Endothelial cell of umbilical vein (primary cell): ENCODE measurements at regions of chr6 and their contacts with region 1.

Region 1: GRCh38 chr6:113994918-113995342 is 24.0 kb upstream of the HDAC2 start:
- DNase-seq: peak; percentile 91
- H3K4me3 ChIP-seq: no peak overlapping the region
- H3K27ac ChIP-seq: peak overlapping the region; percentile 84
- H3K4me1 ChIP-seq: peaks cover 22% of the 10 kb centered on the region
- H3K27me3 ChIP-seq: peaks cover 0 to 2% of the 10 kb centered on the region in 2 experiments
- CTCF ChIP-seq: peak; percentile 72 to 95
- POLR2A ChIP-seq: no peak

Region 2: GRCh38 chr6:113970805-113971676 is 23.9 kb before region 1 on chr6 and contains the start of gene HDAC2:
- CTCF ChIA-PET with region 1: interaction called, 10 read pairs
- POLR2A ChIA-PET with region 1: interaction called, 5 read pairs
- dilution Hi-C with region 1: no loop called
- intact Hi-C with region 1: loop called (anchors 1 kb)
- DNase-seq: peak; percentile 84
- H3K4me3 ChIP-seq: peak within 1 kb of the TSS; percentile 73 to 99 (median 93)
- H3K27ac ChIP-seq: peak within 1 kb of the TSS; percentile 93
- H3K4me1 ChIP-seq: peaks cover 24% of the 10 kb centered on the region
- H3K27me3 ChIP-seq: no peaks in the 10 kb centered on the region
- CTCF ChIP-seq: no peak
- POLR2A ChIP-seq: peak; percentile 75
- total RNA-seq, gene HDAC2: 142 and 148 TPM in 2 replicates

Region 3: DNA sequence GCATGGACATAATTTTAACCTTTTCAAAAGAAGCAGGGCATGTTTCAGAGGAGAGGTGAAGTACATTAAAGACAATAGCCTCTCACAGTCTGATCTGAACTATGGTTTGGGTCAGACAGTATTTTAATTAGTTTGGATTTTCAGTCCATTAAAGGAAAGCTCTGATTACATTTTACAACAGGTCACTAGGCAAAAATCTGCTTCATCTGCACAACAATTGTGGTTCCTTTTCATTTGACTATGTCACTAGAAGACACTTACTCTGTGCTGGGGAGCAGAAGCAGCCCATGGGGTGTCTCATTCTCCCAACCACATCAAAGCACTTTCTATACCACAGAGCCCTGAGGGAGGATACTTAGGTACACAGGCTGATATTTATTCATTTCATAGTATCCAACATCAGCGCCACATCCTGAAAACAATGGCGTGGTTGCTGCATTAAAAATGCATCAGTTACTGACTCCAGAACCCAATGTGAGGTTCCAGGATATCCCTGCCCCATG is 12.6 kb after region 1 on chr6:
- CTCF ChIA-PET with region 1: interaction called, 20 read pairs
- POLR2A ChIA-PET with region 1: interaction called, 4 read pairs
- dilution Hi-C with region 1: no loop called
- intact Hi-C with region 1: loop called (anchors 1 kb)
- DNase-seq: no peak
- H3K4me3 ChIP-seq: no peak overlapping the region
- H3K27ac ChIP-seq: peak overlapping the region; percentile 45
- H3K4me1 ChIP-seq: peaks cover 19% of the 10 kb centered on the region
- H3K27me3 ChIP-seq: no peaks in the 10 kb centered on the region
- CTCF ChIP-seq: no peak
- POLR2A ChIP-seq: no peak

Region 4: DNA sequence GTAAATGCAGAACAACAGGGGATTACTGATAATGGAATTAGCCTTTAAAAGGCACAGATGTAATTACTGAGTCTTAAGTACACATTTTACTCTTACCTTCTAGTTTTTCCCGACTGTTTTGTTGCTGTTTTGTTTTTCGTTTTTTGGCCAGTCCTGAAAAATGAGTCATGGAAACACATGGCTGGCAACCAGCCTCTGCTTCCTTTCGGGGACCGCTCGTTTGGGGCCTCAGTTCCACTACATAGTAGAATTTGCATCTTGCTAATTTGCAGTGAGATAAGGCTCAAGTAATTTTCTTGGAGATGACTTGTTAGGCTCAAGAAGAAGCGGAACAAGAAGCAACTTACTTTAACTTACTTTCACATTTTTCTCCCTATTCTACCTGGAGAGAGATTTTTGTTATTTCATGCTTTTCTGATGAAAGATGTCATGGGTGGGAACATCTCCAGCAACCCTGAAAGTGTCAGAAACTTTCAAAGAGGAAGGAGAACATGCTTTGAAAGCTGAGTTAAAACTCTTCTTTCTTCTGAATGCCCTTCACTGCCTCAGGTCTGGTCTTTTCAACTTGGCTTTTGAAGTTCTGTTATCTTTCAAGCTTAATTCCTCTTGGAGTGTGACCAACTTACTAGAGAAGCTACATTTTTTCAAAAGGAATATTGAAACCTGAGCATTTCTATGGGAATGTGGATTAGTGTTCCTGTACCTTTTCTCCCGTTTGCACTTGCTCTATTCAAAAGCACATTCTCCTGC is 47.5 kb after region 1 on chr6:
- CTCF ChIA-PET with region 1: interaction called, 10 read pairs
- POLR2A ChIA-PET with region 1: interaction called, 11 read pairs
- dilution Hi-C with region 1: no loop called
- intact Hi-C with region 1: no loop called
- DNase-seq: no peak
- H3K4me3 ChIP-seq: no peak overlapping the region
- H3K27ac ChIP-seq: no peak overlapping the region
- H3K4me1 ChIP-seq: no peaks in the 10 kb centered on the region
- H3K27me3 ChIP-seq: peaks cover 0 to 1% of the 10 kb centered on the region in 2 experiments
- CTCF ChIP-seq: no peak
- POLR2A ChIP-seq: no peak

Region 5: DNA sequence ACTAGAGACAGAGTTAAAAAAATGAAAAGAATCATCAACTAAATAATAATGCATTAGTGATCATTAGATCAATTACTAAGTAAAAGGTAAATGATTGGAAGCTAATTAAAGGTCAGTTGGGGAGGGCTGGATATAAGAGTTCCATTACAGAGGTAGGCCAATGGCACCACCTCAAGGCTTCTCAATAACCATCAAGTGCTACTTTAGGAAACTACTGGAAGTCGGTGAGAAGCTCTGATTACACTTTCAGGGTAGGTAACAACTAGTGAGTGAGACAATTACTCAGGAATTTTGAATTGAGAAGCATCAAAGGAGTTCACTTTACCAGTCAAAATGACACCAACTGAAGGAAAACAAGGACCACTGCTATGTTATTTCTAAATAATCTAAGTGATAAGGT is 66.2 kb after region 1 on chr6:
- CTCF ChIA-PET with region 1: interaction called, 33 read pairs
- POLR2A ChIA-PET with region 1: no interaction called
- dilution Hi-C with region 1: no loop called
- intact Hi-C with region 1: loop called (anchors 2 kb)
- DNase-seq: no peak
- H3K4me3 ChIP-seq: no peak overlapping the region
- H3K27ac ChIP-seq: no peak overlapping the region
- H3K4me1 ChIP-seq: no peaks in the 10 kb centered on the region
- H3K27me3 ChIP-seq: peaks cover 0 to 6% of the 10 kb centered on the region in 2 experiments
- CTCF ChIP-seq: no peak
- POLR2A ChIP-seq: no peak

Region 6: DNA sequence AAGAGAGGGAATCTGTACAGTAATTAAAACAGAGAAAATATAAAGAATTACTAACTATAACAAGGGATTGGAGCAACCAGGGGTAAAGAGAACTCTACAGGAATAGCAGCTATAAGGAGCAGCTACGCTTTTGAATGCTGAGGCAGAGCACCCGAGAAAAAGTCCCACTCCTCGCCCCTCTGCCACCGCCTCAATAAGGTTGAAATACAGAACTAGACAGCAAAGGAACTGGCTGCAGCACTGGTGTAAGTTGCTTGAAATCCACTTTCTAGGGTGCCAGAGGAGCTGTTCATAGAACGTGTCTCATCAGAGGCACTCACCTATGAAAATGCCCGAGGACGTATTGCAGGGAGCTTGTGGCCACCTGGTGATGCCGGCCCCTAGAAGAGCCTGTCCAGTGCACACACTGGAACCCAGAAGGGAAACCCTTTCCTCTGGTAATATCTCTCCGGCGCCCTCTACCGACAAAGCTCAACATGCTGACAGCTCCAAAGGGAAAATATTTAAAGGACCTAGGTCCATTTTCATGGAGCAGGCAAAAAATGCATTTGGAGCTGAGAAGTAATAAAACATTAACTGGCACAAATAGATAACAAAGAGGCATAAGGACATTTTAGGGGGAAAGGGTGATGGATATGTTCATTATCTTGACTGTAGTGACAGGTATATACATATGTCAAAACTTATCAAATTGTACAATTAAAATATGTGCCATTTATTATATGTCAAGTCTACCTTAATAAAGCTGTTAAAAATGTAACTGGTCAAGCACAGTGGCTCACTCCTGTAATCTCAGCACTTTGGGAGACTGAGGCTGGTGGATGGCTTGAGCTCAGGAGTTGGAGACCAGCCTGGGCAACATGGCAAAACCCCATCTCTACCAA is 113.4 kb after region 1 on chr6:
- CTCF ChIA-PET with region 1: interaction called, 352 read pairs
- POLR2A ChIA-PET with region 1: interaction called, 8 read pairs
- dilution Hi-C with region 1: no loop called
- intact Hi-C with region 1: loop called (anchors 1 kb)
- DNase-seq: peak; percentile 71
- H3K4me3 ChIP-seq: no peak overlapping the region
- H3K27ac ChIP-seq: no peak overlapping the region
- H3K4me1 ChIP-seq: no peaks in the 10 kb centered on the region
- H3K27me3 ChIP-seq: peaks cover 8 to 15% of the 10 kb centered on the region in 2 experiments
- CTCF ChIP-seq: peak; percentile 68 to 71
- POLR2A ChIP-seq: no peak

Region 7: DNA sequence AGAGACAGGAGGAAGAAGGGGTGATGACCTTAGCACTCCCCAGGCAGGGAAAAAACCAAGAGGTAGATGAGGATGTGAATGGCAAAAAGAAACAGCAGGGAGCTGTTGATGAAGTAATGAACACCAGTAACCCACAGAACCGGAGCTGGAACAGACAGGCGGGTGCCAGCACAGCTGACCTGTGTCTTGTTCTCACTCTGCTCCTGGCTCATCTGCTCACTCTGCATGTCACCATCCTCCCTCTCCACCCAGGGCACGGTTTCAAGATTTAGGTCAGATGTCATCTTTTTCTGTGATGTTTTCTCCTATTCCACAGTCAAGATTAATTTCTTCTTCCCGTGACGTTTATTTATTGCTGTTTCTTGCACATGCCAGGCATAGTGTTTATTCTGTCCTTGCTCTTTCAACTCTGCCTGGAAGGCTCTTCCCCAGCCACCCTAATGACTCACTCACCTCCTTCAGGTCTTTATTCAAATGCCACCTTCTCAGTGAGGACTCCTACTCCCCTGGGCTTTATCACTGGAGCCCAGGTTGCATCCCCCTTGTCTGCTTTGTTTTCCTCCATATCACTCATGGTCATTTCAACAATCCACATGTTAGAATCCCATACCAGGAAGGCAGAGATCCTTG is 140.5 kb after region 1 on chr6:
- CTCF ChIA-PET with region 1: no interaction called
- POLR2A ChIA-PET with region 1: no interaction called
- dilution Hi-C with region 1: no loop called
- intact Hi-C with region 1: no loop called
- DNase-seq: no peak
- H3K4me3 ChIP-seq: no peak overlapping the region
- H3K27ac ChIP-seq: no peak overlapping the region
- H3K4me1 ChIP-seq: no peaks in the 10 kb centered on the region
- H3K27me3 ChIP-seq: no peaks in the 10 kb centered on the region
- CTCF ChIP-seq: no peak
- POLR2A ChIP-seq: no peak

Region 8: DNA sequence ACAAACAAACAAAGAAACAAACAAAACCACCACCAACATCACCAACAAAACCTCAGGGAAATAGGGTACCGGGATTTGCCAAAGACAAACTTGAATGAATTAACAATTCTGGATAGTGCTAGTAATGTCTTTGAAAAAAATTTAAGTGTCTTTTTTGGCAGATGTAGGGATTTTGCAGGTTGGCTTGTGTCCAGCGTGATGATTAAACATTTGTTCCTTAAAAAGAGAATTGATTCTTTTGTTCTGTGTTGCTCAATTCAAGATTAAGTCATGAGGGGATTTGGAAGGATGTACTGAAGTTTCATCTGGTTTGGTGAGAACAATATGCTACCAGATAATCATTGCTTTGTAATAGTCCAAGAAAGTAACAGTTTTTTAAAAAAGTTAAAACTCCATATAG is 473.0 kb after region 1 on chr6:
- CTCF ChIA-PET with region 1: no interaction called
- POLR2A ChIA-PET with region 1: no interaction called
- dilution Hi-C with region 1: no loop called
- intact Hi-C with region 1: no loop called
- DNase-seq: no peak
- H3K4me3 ChIP-seq: no peak overlapping the region
- H3K27ac ChIP-seq: no peak overlapping the region
- H3K4me1 ChIP-seq: no peaks in the 10 kb centered on the region
- H3K27me3 ChIP-seq: no peaks in the 10 kb centered on the region
- CTCF ChIP-seq: no peak
- POLR2A ChIP-seq: no peak

Region 9: GRCh38 chr6:115896538-115897129 is 1901.7 kb after region 1 on chr6:
- CTCF ChIA-PET with region 1: interaction called, 17 read pairs
- POLR2A ChIA-PET with region 1: no interaction called
- dilution Hi-C with region 1: no loop called
- intact Hi-C with region 1: loop called (anchors 2 kb)
- DNase-seq: peak; percentile 37
- H3K4me3 ChIP-seq: no peak overlapping the region
- H3K27ac ChIP-seq: no peak overlapping the region
- H3K4me1 ChIP-seq: no peaks in the 10 kb centered on the region
- H3K27me3 ChIP-seq: no peaks in the 10 kb centered on the region
- CTCF ChIP-seq: peak; percentile 47 to 55
- POLR2A ChIP-seq: no peak